Panc1 (cell line): ENCODE measurements at regions of chr3 and their contacts with region 1.

Region 1: DNA sequence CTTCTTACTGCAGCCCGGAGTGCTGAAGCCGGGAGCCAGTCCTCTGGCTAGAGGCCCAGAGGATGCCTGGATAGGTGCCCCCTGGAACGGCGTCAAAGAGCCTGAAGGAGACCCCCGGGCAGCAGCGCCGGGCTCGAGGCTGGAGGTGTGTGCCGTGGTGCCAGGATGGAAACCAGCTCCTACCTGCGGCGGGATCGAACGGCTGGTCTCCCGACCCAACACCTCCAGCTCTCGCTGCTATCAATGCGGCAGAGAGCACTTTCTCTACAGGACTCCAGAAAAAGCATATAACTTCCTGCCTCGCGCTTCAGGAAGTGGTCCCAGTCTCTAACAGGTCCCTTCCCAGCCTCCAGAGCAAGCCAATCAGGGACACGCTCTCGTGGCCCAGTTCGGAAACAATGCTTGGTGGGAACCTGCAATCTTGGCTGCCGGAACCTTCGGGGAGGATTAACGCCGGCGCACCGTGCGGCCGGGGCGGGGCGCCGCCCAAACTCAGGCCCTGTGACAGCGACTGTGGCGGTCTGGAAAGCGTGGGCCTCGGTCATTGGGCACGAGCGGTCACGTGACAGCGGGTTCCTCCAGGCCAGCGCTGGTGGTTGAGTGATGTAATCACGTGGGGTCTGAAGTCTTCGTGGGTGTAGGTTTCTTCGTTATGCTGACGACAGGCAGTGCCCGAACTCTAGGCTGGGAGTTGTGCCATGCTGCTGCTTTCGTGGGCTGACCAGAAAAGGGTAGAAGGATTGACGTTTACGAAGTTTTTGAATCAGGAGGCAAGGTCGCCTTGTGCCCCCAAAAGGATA is at the start of gene SLC33A1:
- DNase-seq: peak; percentile 97
- ATAC-seq: peak; percentile 98
- H3K4me3 ChIP-seq: peak within 1 kb of the TSS; percentile 83 to 89
- H3K27ac ChIP-seq: peak within 1 kb of the TSS; percentile 98
- H3K4me1 ChIP-seq: 0 out of 2 replicates have a peak, but pooled peaks cover 8% of the 10 kb centered on the region
- H3K27me3 ChIP-seq: no peaks in the 10 kb centered on the region
- CTCF ChIP-seq: no peak
- total RNA-seq, gene SLC33A1: 27.2 TPM

Region 2: DNA sequence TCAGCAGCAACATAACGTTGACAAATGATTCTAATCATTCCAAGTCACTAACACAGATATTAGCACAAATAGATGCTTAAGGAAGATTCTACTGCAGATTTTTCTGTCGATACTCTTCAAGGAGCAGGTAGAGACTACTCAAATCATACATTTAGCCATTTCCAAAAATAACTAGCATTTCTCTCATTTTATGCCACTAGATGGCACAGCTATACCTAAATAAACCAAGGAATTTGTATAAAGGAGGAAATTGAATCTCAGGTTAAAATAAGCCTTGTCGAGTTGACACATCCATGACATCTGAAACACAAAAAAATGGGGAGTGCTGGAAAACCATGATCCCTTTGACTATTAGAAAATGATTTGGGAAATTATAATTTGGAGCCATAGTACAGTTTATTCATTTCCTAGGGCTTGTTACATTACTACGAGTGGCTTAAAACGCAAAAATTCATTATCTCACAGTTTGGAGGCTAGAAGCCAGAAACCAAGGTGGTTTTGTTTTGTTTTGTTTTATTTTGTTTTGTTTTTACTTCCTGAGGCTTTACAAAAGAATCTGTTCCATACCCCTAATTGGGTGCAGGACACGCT is 501.3 kb before region 1 on chr3:
- CTCF ChIA-PET with region 1: no interaction called
- POLR2A ChIA-PET with region 1: no interaction called
- in situ Hi-C with region 1: no loop called
- intact Hi-C with region 1: loop called (anchors 10 kb)
- DNase-seq: peak; percentile 24
- ATAC-seq: peak; percentile 73
- H3K4me3 ChIP-seq: no peak overlapping the region
- H3K27ac ChIP-seq: no peak overlapping the region
- H3K4me1 ChIP-seq: no peaks in the 10 kb centered on the region
- H3K27me3 ChIP-seq: no peaks in the 10 kb centered on the region
- CTCF ChIP-seq: peak; percentile 59; the same call in 1 of the 2 replicates

Region 3: DNA sequence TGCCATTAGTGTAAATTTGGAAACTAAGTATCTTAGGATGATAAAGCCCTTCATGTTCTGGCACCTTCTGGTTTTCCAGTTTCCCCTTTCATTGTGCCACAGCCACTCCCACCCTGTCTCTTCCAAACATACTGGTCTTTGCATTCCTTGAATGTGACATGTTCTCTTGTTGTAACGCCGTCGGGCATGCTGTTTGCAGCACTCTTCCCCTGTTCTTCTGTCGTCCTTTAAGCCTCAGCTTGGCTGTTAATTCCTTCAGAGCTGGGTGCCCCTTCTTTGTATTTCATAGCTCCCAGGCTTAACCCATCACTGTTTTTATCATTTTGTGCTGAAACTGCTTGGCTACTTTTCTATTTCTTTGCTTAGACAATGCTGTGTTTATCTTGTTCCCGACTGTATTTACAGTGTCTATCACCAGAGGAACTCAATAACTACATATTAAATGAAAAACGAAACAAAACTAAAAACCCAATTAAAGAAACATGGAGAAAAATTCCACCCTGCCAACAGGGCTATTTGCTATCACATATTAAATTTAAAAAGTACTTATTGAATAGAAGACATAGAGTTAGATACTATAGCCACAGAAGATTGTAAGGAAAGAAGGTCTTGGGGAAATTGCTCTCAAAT is 170.7 kb after region 1 on chr3:
- CTCF ChIA-PET with region 1: no interaction called
- POLR2A ChIA-PET with region 1: no interaction called
- in situ Hi-C with region 1: no loop called
- intact Hi-C with region 1: no loop called
- DNase-seq: no peak
- ATAC-seq: no peak
- H3K4me3 ChIP-seq: no peak overlapping the region
- H3K27ac ChIP-seq: no peak overlapping the region
- H3K4me1 ChIP-seq: no peaks in the 10 kb centered on the region
- H3K27me3 ChIP-seq: peaks cover 23% of the 10 kb centered on the region
- CTCF ChIP-seq: no peak